Sigmoid colon (tissue), 7 donors: ENCODE measurements at regions of chr1 and their contacts with region 1.

Region 1: GRCh38 chr1:146012737-146013403 is 8.7 kb downstream of the HJV start:
- DNase-seq: peak; percentile 57
- H3K4me3 ChIP-seq: no peak overlapping the region
- H3K27ac ChIP-seq: no peak overlapping the region
- H3K4me1 ChIP-seq: peaks cover 0 to 8% (median 5%) of the 10 kb centered on the region in 4 donors
- H3K27me3 ChIP-seq: no peaks in the 10 kb centered on the region
- CTCF ChIP-seq: peak; percentile 62 to 75 (median 67)
- EP300 ChIP-seq: no peak
- POLR2A ChIP-seq: no peak

Region 2: DNA sequence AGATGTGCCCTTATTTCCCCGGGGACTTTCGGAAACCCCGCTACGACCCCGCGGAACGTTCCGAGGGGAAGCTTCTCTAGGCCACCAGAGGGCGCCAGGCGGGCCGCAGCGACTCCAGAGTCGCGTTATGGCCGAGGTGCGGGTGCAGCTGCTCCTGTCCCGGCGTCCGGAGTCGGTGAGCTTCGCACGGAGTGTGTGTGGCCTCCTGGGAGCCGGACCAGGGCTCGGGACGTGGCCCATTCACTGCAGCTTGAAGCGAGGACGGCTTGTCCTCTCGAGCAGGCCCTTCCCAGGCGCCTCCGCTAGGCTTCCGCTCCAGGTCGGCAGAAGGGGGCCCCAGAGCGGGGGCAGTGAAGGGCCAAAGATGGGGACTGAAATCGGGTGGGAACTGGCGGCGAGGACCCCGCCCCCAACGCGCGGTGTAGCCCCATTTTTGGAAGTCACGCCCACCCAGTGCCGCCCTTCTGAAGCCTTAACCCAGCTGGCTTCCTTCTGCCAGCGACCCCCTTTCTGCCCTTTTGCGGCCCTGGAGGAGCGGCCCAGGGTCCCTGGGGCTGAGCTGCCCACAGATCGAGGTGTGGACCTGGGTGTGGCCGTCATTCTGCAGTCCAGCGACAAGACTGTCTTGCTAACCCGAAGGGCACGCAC is 167.2 kb before region 1 on chr1 and contains the start of gene NUDT17:
- intact Hi-C with region 1: loop called (anchors 2 kb)
- DNase-seq: peak; percentile 90
- H3K4me3 ChIP-seq: peak within 1 kb of the TSS; percentile 33 to 61 (median 54)
- H3K27ac ChIP-seq: peak within 1 kb of the TSS; percentile 75 to 85 (median 79)
- H3K4me1 ChIP-seq: peaks cover 0 to 14% (median 13%) of the 10 kb centered on the region in 4 donors
- H3K27me3 ChIP-seq: no peaks in the 10 kb centered on the region
- CTCF ChIP-seq: peak; percentile 79 to 91 (median 86)
- EP300 ChIP-seq: no peak
- POLR2A ChIP-seq: peak in 1 of 2 donors; percentile 16
- total RNA-seq, gene NUDT17: 1.6 to 9.1 (median 2.8) TPM

Region 3: GRCh38 chr1:145891587-145892485 is 121.0 kb before region 1 on chr1:
- intact Hi-C with region 1: loop called (anchors 1 kb)
- DNase-seq: peak; percentile 98
- H3K4me3 ChIP-seq: peak overlapping the region in 2 of 4 donors; percentile 14 to 24
- H3K27ac ChIP-seq: peak overlapping the region; percentile 78 to 86 (median 78)
- H3K4me1 ChIP-seq: peaks cover 0 to 21% (median 18%) of the 10 kb centered on the region in 4 donors
- H3K27me3 ChIP-seq: no peaks in the 10 kb centered on the region
- CTCF ChIP-seq: peak; percentile 93 to 98 (median 96)
- EP300 ChIP-seq: peak in 1 of 4 donors; percentile 31
- POLR2A ChIP-seq: no peak

Region 4: GRCh38 chr1:145912128-145912641 is 100.7 kb before region 1 on chr1:
- intact Hi-C with region 1: loop called (anchors 5 kb)
- DNase-seq: no peak
- H3K4me3 ChIP-seq: no peak overlapping the region
- H3K27ac ChIP-seq: no peak overlapping the region
- H3K4me1 ChIP-seq: peaks cover 0 to 14% (median 11%) of the 10 kb centered on the region in 4 donors
- H3K27me3 ChIP-seq: no peaks in the 10 kb centered on the region
- CTCF ChIP-seq: no peak
- EP300 ChIP-seq: no peak
- POLR2A ChIP-seq: no peak

Region 5: GRCh38 chr1:145977486-145978470 is 35.1 kb before region 1 on chr1:
- intact Hi-C with region 1: loop called (anchors 1 kb)
- DNase-seq: peak; percentile 94
- H3K4me3 ChIP-seq: peak overlapping the region in 2 of 4 donors; percentile 0 to 8
- H3K27ac ChIP-seq: peak overlapping the region; percentile 92 to 96 (median 94)
- H3K4me1 ChIP-seq: peaks cover 0 to 54% (median 54%) of the 10 kb centered on the region in 4 donors
- H3K27me3 ChIP-seq: no peaks in the 10 kb centered on the region
- CTCF ChIP-seq: peak in 3 of 4 experiments; percentile 83 to 92 (median 86)
- EP300 ChIP-seq: no peak
- POLR2A ChIP-seq: no peak

Region 6: DNA sequence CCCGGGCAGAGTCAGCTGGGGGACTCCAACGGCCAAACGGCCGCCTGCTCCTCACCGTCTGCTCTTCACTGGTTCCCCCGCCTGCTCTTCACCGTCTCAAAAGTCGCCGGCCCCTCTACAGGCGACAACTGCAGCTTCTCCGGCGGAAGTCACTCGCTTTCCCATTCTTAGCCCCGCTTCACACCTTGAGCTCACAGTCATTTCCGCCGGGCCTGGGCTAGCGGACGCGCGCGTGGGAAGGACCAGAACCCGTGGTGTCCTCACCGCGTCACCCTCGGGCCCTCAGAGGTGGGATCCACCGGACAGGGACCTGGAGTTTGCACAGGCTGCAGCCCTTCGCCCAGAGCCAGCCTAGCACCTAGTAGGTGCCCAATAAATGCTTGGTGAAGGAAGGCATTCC is 36.6 kb after region 1 on chr1:
- intact Hi-C with region 1: no loop called
- DNase-seq: no peak
- H3K4me3 ChIP-seq: no peak overlapping the region
- H3K27ac ChIP-seq: no peak overlapping the region
- H3K4me1 ChIP-seq: no peaks in the 10 kb centered on the region
- H3K27me3 ChIP-seq: no peaks in the 10 kb centered on the region
- CTCF ChIP-seq: no peak
- EP300 ChIP-seq: no peak
- POLR2A ChIP-seq: no peak